Left ventricle myocardium superior (tissue), 1 donor: ENCODE measurements at regions of chr17 and their contacts with region 1.

Region 1: GRCh38 chr17:1516388-1517161 is at the start of gene INPP5K:
- DNase-seq: peak; percentile 99
- ATAC-seq: peak; percentile 95
- total RNA-seq, gene INPP5K: 39.1 TPM

Region 2: DNA sequence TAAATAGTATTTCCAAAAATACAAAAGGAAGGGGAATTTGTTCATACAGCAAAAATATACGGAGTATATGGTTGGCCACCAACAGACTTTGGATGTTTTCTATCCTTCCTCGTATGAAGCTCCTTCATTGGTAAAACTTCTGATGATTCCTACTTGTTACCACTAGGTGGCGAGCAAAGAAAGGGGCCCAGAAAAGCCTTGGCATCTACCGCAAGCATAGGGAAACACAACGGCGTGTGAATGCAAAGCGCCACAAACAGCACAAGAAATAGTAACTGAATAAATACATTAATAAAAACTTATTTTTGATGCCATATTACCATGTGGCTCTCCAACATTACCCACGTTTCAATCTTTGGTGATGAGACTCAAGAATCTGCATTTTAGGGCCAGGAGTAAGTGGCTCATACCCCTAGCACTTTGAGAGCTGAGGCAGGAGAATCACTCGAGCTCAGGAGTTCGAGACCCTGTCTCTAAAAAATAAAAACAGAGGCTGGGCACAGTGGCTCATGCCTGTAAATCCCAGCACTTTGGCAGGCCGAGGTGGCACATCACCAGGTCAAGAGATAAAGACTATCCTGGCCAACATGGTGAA is 151.0 kb before region 1 on chr17:
- intact Hi-C with region 1: loop called (anchors 10 kb)
- DNase-seq: no peak
- ATAC-seq: peak; percentile 67